CD4-positive, alpha-beta T cell (primary cell): ENCODE measurements at regions of chr18 and their contacts with region 1.

Region 1: GRCh38 chr18:60215432-60215831 is 157.1 kb downstream of the MC4R start:
- DNase-seq: no peak
- ATAC-seq: no peak
- H3K4me3 ChIP-seq: no peak overlapping the region
- H3K4me3 Mint-ChIP-seq: no peak overlapping the region
- H3K27ac ChIP-seq: no peak overlapping the region
- H3K27ac Mint-ChIP-seq: no peak overlapping the region
- H3K4me1 ChIP-seq: no peaks in the 10 kb centered on the region
- H3K4me1 Mint-ChIP-seq: no peaks in the 10 kb centered on the region
- H3K27me3 ChIP-seq: no peaks in the 10 kb centered on the region
- H3K27me3 Mint-ChIP-seq: no peaks in the 10 kb centered on the region
- CTCF ChIP-seq: no peak

Region 2: DNA sequence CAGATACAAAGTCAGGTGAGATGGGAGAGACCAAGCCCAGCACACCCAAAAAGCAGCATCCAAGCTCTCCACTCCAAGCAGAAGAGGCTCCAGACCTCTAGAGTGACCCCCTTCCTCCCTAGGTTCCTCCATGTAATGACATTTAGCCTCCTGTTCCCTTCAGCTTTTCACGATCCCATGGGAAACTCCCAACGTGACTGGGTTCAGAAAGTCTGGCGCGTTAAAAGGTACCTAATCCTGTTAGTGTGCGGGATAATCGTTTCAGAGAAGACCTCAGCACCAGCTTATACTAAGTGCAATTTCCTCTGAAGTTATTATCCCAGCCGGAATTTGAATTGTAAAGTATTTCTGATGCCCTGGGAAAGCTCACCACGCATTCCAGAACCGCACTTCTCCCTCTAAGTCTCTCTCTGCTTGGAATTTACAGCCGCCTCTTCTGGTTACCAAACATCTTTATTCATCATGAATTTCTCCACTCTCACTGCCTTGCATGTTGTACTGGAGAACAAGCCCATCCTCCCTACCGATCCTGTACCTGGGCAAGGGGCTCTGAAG is 565.1 kb before region 1 on chr18:
- CTCF ChIA-PET with region 1: no interaction called
- POLR2A ChIA-PET with region 1: no interaction called
- intact Hi-C with region 1: no loop called
- DNase-seq: no peak
- ATAC-seq: no peak
- H3K4me3 ChIP-seq: no peak overlapping the region
- H3K4me3 Mint-ChIP-seq: no peak overlapping the region
- H3K27ac ChIP-seq: no peak overlapping the region
- H3K27ac Mint-ChIP-seq: no peak overlapping the region
- H3K4me1 ChIP-seq: no peaks in the 10 kb centered on the region
- H3K4me1 Mint-ChIP-seq: no peaks in the 10 kb centered on the region
- H3K27me3 ChIP-seq: no peaks in the 10 kb centered on the region
- H3K27me3 Mint-ChIP-seq: peaks cover 22% of the 10 kb centered on the region
- CTCF ChIP-seq: no peak

Region 3: DNA sequence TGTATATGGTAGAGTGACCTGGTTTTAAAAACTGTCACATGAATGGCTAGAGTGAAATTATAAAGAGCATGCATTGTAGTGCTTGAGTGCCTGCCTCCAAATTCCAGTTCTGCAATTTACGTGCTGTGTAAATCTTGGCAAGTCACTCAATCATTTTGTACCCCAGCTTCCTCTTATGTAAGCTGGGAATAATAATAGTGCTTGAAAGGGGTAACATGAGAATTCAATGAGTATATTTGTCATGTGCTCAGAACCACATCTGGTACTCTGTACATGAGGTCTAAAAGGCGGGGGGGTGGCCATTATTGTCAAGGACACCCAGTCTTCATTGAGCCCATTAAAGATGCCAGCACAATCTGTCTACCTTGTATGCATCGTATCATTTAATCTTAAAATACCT is 57.6 kb before region 1 on chr18:
- CTCF ChIA-PET with region 1: no interaction called
- POLR2A ChIA-PET with region 1: no interaction called
- intact Hi-C with region 1: loop called in 1 of 2 experiments (anchors 10 kb)
- DNase-seq: no peak
- ATAC-seq: no peak
- H3K4me3 ChIP-seq: no peak overlapping the region
- H3K4me3 Mint-ChIP-seq: no peak overlapping the region
- H3K27ac ChIP-seq: no peak overlapping the region
- H3K27ac Mint-ChIP-seq: no peak overlapping the region
- H3K4me1 ChIP-seq: no peaks in the 10 kb centered on the region
- H3K4me1 Mint-ChIP-seq: no peaks in the 10 kb centered on the region
- H3K27me3 ChIP-seq: no peaks in the 10 kb centered on the region
- H3K27me3 Mint-ChIP-seq: no peaks in the 10 kb centered on the region
- CTCF ChIP-seq: no peak